ENCODE measurements at regions of chr7 and their contacts with region 1.

Region 1: GRCh38 chr7:134943764-134944400 is 42.4 kb upstream of the AGBL3 start:
- DNase-seq: peak; percentile 13
- H3K4me3 Mint-ChIP-seq: no peak overlapping the region
- H3K27ac Mint-ChIP-seq: no peak overlapping the region
- H3K4me1 Mint-ChIP-seq: peaks cover 16% of the 10 kb centered on the region
- H3K27me3 Mint-ChIP-seq: no peaks in the 10 kb centered on the region
- CTCF ChIP-seq: no peak

Region 2: DNA sequence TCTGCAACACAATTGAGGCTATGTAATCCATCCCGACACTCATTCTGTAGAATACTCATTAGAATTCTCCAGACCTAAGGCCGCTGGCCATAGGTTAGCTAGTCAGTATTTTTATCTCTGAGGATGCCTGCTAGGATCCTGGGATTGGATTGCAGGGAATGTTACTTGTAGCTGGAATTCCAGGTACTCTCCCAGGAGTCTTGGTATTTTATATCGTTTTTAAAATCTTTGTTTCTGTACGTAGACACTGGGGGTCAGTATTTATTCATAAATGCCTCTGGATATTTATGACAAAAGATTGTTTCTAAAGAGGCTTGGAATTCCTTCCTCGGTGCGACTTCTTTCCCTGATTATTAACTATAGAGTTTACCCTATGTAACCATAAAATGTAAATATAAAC is 257.1 kb before region 1 on chr7:
- CTCF ChIA-PET with region 1: interaction called, 9 read pairs
- intact Hi-C with region 1: loop called (anchors 2 kb)
- DNase-seq: no peak
- H3K4me3 Mint-ChIP-seq: no peak overlapping the region
- H3K27ac Mint-ChIP-seq: no peak overlapping the region
- H3K4me1 Mint-ChIP-seq: no peaks in the 10 kb centered on the region
- H3K27me3 Mint-ChIP-seq: peaks cover 7% of the 10 kb centered on the region
- CTCF ChIP-seq: peak; percentile 32

Region 3: DNA sequence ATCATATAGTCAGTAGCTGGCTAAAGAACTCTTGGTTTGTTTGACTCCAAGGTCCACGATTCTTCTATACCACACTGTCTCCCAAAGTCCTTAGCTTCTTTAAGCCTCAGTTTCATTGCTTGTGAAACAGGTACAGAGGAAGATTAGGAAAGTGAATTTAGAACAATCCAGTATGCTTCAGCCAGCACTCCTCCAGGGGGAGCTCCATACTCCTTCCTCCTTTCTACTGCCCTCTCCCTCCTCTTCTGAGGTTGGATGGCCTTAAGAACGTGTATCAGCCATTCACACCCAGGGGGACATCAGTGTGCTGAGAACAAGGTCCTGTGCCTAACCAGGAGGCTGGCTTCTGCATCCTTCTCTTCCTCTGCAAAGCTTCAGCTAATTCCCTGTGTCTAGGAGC is 219.3 kb before region 1 on chr7:
- CTCF ChIA-PET with region 1: interaction called, 7 read pairs
- intact Hi-C with region 1: loop called (anchors 1 kb)
- DNase-seq: peak; percentile 57
- H3K4me3 Mint-ChIP-seq: no peak overlapping the region
- H3K27ac Mint-ChIP-seq: no peak overlapping the region
- H3K4me1 Mint-ChIP-seq: peaks cover 8% of the 10 kb centered on the region
- H3K27me3 Mint-ChIP-seq: no peaks in the 10 kb centered on the region
- CTCF ChIP-seq: no peak

Region 4: GRCh38 chr7:134886353-134887081 is 57.4 kb before region 1 on chr7:
- CTCF ChIA-PET with region 1: no interaction called
- intact Hi-C with region 1: loop called (anchors 5 kb)
- DNase-seq: no peak
- H3K4me3 Mint-ChIP-seq: no peak overlapping the region
- H3K27ac Mint-ChIP-seq: peak overlapping the region; percentile 60
- H3K4me1 Mint-ChIP-seq: peaks cover 33% of the 10 kb centered on the region
- H3K27me3 Mint-ChIP-seq: no peaks in the 10 kb centered on the region
- CTCF ChIP-seq: no peak

Region 5: GRCh38 chr7:135083005-135083404 is 139.1 kb after region 1 on chr7:
- CTCF ChIA-PET with region 1: no interaction called
- intact Hi-C with region 1: no loop called
- DNase-seq: no peak
- H3K4me3 Mint-ChIP-seq: no peak overlapping the region
- H3K27ac Mint-ChIP-seq: no peak overlapping the region
- H3K4me1 Mint-ChIP-seq: no peaks in the 10 kb centered on the region
- H3K27me3 Mint-ChIP-seq: no peaks in the 10 kb centered on the region
- CTCF ChIP-seq: no peak

Measured in Calu3 (cell line).